RWPE1 (cell line): ENCODE measurements at regions of chr2 and their contacts with region 1.

Region 1: DNA sequence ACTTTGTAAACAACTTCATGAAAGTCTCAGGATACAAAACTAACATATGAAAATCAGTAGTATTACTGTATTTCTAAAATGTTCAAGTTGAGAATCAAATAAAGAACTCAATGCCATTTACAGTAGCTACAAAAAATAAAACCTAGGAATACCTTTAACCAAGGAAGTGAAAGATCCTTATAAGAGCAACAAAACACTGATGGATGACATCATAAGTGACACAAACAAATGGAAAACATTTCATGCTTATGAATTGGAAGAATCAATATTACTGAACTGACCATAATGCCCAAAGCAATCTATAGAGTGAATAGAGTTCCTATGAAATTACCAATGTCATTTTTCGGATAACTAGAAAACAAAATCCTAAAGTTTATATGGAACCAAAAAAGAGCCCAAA is 1038.1 kb downstream of the SUCLG1 start:
- DNase-seq: no peak
- H3K27ac ChIP-seq: no peak overlapping the region
- CTCF ChIP-seq: no peak

Region 2: DNA sequence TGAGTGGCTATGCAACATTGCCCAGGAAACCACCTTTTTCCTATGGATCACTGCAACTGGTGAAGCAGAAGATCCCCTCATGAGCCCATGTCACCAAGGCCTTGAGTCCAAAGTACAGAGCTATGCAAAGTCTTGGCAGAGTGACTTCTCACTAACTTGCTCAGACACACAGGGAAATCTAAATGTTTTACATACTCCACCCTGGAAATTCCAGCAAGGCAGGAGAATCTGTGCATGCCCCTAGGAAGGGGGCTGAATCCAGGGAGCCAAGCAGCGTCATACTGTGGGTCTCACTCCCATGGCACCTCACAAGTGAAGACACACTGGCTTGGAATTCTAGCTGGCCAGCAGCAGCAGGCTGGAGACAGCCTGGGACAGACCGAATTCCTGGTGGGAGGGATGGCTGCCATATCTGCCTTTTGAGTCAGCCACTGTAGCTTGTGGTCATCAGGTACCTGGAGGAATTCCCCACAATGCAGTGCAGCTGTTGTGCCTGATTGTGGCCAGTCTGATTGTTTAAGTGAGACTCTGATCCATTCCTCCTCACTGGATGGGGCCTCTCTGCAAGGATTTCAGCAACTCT is 779.3 kb before region 1 on chr2:
- CTCF ChIA-PET with region 1: interaction called, 13 read pairs
- POLR2A ChIA-PET with region 1: no interaction called
- DNase-seq: no peak
- H3K27ac ChIP-seq: no peak overlapping the region
- CTCF ChIP-seq: no peak

Region 3: DNA sequence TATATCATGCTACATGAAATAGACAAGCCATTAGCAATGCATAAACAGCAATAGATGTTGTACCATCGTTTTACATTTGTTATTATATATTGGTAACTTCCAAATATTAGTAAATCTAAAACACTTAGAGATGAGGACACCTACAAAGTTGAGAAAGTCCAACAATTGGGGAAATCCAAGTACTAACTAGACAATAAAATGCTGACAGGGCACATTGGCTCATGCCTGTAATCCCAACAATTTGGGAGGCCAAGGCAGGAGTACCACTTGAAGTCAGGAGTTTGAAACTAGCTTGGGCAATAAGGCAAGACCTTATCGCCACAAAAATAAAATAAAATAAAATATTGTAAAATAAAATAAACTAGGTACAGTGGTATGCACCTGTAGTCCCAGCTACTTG is 15.0 kb after region 1 on chr2:
- CTCF ChIA-PET with region 1: no interaction called
- POLR2A ChIA-PET with region 1: no interaction called
- DNase-seq: no peak
- H3K27ac ChIP-seq: no peak overlapping the region
- CTCF ChIP-seq: no peak